ENCODE measurements at regions of chr3 and their contacts with region 1.

Region 1: DNA sequence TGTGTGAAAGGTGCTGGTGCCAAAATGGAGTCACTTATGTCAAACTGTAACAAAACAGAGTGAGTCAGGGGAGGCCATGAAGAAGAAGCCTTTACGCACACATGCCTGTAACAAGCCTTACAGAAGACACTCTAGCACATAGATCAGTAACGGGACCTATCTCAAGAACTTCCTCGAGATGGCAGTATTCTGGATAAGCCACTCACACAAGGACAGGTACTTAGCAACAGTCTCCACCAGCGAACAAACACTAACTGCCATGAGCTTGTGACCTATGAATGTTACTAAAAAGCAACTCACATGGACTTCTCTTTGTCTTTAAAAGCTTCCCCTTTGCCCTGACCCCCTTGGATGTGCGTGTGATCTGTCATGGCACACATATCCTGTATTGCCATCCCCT is 235.1 kb downstream of the CD47 start:
- DNase-seq: no peak
- CTCF ChIP-seq: no peak

Region 2: DNA sequence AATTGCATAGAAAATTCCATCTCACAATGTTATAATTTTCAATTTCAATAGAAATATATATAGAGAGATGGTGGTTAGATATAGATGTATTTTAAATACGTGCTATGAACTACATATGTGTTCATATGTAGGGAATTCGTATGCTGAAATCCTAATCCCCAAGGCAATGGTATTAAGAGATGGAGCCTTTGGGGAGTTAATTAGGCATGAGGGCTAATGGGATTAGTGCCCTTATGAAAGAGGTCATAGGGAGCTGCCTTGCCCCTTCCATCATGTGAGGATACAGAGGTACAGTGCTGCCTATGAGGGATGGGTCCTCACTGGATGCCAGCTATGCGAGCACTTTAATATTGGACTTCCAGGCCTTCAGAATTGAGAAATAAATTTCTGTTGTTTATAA is 558.1 kb before region 1 on chr3:
- CTCF ChIA-PET with region 1: no interaction called
- POLR2A ChIA-PET with region 1: no interaction called
- DNase-seq: no peak
- CTCF ChIP-seq: no peak

Region 3: GRCh38 chr3:107870943-107871638 is 15.4 kb after region 1 on chr3:
- CTCF ChIA-PET with region 1: interaction called, 19 read pairs
- POLR2A ChIA-PET with region 1: no interaction called
- DNase-seq: no peak
- CTCF ChIP-seq: no peak

Region 4: GRCh38 chr3:107987036-107987947 is 131.6 kb after region 1 on chr3:
- CTCF ChIA-PET with region 1: no interaction called
- POLR2A ChIA-PET with region 1: no interaction called
- DNase-seq: no peak
- CTCF ChIP-seq: no peak

Measured in GM10248 (cell line).